Lower leg skin (tissue), 4 donors: ENCODE measurements at regions of chr21 and their contacts with region 1.

Region 1: DNA sequence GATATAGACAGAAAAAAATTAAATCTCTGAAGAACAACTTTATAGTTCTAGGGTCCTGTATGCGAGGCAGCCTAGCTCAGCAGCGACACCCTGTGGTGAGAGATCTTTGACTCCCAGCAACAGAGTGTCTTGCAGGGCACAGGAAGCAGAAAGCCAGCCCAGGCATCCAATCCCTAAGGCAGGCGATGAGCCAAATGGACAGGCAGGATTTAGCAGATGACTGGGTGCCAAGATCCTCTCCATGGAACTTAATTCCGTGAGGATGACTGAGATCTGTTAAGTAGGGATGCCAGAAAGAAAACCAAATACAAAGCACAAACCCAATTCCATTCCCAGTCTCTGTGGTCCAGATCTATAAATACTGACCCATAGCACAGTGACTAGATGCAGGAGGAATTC is 38.8 kb downstream of the HLCS start:
- DNase-seq: peak; percentile 69 to 94
- H3K4me3 ChIP-seq: no peak overlapping the region
- CTCF ChIP-seq: no peak
- POLR2A ChIP-seq: no peak

Region 2: GRCh38 chr21:36698981-36699891 is 228.5 kb before region 1 on chr21 and contains the start of gene SIM2:
- intact Hi-C with region 1: no loop called
- DNase-seq: no peak
- H3K4me3 ChIP-seq: no peak within 1 kb of the TSS
- CTCF ChIP-seq: no peak
- POLR2A ChIP-seq: no peak
- total RNA-seq, gene SIM2: 0.36 TPM in 1 of 4 donors, not detected in the others

Region 3: GRCh38 chr21:36747815-36748383 is 179.8 kb before region 1 on chr21:
- intact Hi-C with region 1: loop called (anchors 10 kb)
- DNase-seq: no peak
- H3K4me3 ChIP-seq: no peak overlapping the region
- CTCF ChIP-seq: no peak
- POLR2A ChIP-seq: no peak